Transverse colon (tissue), 4 donors: ENCODE measurements at regions of chr5 and their contacts with region 1.

Region 1: GRCh38 chr5:50580506-50580905 is 85.9 kb upstream of the PARP8 start:
- DNase-seq: no peak
- H3K4me3 ChIP-seq: no peak overlapping the region
- H3K27ac ChIP-seq: no peak overlapping the region
- H3K4me1 ChIP-seq: no peaks in the 10 kb centered on the region
- H3K27me3 ChIP-seq: no peaks in the 10 kb centered on the region
- CTCF ChIP-seq: no peak
- EP300 ChIP-seq: no peak
- POLR2A ChIP-seq: no peak

Region 2: DNA sequence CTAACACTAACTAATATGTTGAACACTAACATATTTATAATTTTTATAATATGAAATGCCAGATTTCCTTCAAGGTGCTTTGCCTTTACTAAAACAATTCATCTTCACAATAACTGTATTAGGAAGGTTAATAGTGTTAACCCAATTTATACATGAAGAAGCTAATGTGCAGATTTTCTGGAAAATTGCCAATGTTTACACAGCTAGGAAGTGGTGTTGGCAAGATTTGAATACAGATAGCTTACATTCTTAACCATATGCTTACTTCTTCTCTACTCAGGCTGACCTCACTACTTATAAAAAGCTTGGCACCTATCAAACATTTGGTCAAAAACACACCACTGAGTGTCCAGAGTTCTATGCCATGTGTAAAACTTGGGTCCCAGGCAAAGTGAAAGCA is 1761.9 kb after region 1 on chr5:
- in situ Hi-C with region 1: no loop called
- intact Hi-C with region 1: loop called (anchors 10 kb)
- DNase-seq: no peak
- H3K4me3 ChIP-seq: no peak overlapping the region
- H3K27ac ChIP-seq: no peak overlapping the region
- H3K4me1 ChIP-seq: no peaks in the 10 kb centered on the region
- H3K27me3 ChIP-seq: no peaks in the 10 kb centered on the region
- CTCF ChIP-seq: no peak
- EP300 ChIP-seq: no peak
- POLR2A ChIP-seq: no peak